Left cardiac atrium (tissue), 4 donors: ENCODE measurements at regions of chr1 and their contacts with region 1.

Region 1: DNA sequence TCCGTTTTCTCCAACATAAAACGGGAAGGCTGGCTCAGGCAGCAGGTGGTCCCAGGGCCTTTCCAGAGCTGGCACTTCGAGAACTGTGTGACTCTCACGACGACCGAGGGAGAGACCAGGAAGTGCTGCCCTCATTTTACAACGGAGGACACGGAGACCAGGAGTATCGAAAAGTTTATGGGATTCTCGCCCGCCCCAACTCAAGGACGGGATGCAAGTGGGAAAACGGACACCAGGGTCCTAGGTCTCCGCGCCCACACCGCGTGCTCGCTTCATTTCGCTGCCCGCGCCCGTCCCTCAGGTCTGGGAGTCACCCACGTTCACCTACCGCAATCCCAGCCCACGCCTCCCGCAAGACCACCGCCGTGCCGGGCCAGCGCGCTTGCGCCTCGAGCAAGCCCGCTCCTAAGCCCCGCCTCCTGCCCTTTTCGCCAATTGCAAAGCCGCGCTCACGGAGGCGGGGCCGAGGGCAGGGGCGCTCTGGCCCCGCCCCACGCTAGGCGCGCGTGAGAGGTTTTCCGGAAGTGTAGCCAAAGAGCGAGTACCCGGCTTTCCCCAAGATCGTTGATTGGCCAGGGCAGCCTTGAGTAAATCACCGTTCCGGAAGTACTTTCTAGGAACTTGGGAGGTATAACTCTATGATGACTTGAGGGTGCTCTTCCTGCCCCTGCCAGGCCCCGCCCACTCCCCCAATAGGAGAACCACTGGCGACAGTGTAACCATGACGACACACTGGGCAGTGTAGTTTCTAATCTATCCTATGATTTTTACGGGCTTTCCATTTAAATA is at the start of gene PARS2:
- DNase-seq: peak; percentile 98
- ATAC-seq: peak; percentile 99
- total RNA-seq, gene PARS2: 2.9 to 3.3 TPM

Region 2: GRCh38 chr1:54095546-54096226 is 668.6 kb before region 1 on chr1:
- intact Hi-C with region 1: no loop called
- DNase-seq: no peak
- ATAC-seq: peak; percentile 35 to 38

Region 3: GRCh38 chr1:54715493-54716298 is 48.6 kb before region 1 on chr1 and contains the start of gene TTC4:
- intact Hi-C with region 1: loop called in 1 of 2 experiments (anchors 5 kb)
- DNase-seq: peak; percentile 85
- ATAC-seq: peak; percentile 99
- total RNA-seq, gene TTC4: 11.0 to 16.0 TPM